Breast epithelium (tissue), 4 donors: ENCODE measurements at regions of chrX and their contacts with region 1.

Region 1: DNA sequence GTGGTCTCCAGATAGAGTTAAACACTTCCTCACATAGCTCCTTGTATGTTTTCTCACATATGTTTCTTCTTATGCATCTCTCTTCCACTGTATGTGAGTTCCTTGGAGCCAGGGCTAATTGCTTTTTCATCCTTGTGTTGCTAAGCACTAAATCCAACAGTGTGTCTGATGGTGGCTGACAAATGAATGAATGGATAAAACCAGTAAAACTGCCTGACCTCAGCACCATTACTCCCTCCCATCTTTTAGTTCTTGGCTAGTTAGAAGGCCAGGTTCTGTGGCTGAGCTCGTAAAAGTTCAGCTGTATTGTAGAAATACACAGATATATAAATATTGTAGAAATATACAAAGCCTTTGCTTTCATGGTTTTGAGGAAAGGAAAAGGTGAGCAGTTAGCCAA is 50.4 kb downstream of the ARX start:
- DNase-seq: no peak
- H3K4me3 ChIP-seq: no peak overlapping the region
- H3K27ac ChIP-seq: no peak overlapping the region
- H3K4me1 ChIP-seq: no peaks in the 10 kb centered on the region
- H3K27me3 ChIP-seq: no peaks in the 10 kb centered on the region
- CTCF ChIP-seq: no peak
- POLR2A ChIP-seq: no peak

Region 2: GRCh38 chrX:24002167-24002566 is 963.2 kb before region 1 on chrX:
- intact Hi-C with region 1: no loop called
- DNase-seq: no peak
- H3K4me3 ChIP-seq: no peak overlapping the region
- H3K27ac ChIP-seq: no peak overlapping the region
- H3K4me1 ChIP-seq: no peaks in the 10 kb centered on the region
- H3K27me3 ChIP-seq: peaks cover 0 to 8% of the 10 kb centered on the region in 2 donors
- CTCF ChIP-seq: no peak
- POLR2A ChIP-seq: no peak

Region 3: DNA sequence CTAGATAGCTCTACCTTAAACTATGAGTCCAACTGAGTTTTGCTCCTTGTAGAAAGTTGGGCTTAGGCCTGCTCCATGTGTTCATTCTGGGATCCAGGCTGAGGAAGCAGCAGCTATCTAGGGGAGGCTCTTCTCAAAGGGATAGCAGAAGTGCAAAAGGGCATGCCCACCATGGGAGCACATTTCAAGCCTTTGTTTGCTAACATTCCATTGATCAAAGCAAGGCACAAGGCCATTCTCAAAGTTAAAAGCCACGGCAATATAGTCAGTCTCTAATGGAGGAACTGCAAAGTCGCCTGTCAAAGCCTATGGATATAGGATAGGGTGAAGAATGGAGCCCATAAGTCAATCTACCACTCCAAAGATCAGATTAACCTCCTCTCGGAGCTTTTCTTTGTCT is 538.5 kb after region 1 on chrX:
- intact Hi-C with region 1: loop called (anchors 5 kb)
- DNase-seq: no peak
- H3K4me3 ChIP-seq: no peak overlapping the region
- H3K27ac ChIP-seq: no peak overlapping the region
- H3K4me1 ChIP-seq: no peaks in the 10 kb centered on the region
- H3K27me3 ChIP-seq: peaks cover 0 to 4% of the 10 kb centered on the region in 2 donors
- CTCF ChIP-seq: no peak
- POLR2A ChIP-seq: no peak